ENCODE measurements at regions of chr1 and their contacts with region 1.

Region 1: GRCh38 chr1:61049850-61050540 is 32.4 kb upstream of the NFIA start:
- DNase-seq: peak; percentile 77 to 91
- H3K4me3 ChIP-seq: peak overlapping the region; percentile 88
- H3K27ac ChIP-seq: no peak overlapping the region
- H3K4me1 ChIP-seq: peaks cover 4% of the 10 kb centered on the region; the same call in 1 of the 2 replicates
- H3K27me3 ChIP-seq: no peaks in the 10 kb centered on the region
- CTCF ChIP-seq: peak; percentile 93

Region 2: DNA sequence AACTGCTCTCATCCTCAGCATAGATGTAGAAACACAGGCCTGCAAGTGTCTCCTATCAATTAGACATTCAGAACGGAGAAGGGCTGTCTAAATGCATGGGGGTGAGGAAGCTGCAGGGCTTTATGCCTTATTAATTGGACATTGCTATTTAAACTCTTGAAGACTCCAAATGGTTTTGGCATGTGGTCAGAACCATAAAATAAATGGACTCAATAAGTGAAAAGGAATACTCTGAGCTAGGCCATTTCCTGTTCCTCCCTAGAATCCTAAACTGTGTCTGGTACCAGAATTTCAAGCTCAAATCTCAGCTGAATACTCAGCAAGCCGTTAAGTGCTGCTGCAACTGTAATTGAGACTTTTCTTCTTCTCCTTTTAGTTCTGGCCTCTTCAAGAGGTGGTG is 896.0 kb before region 1 on chr1:
- CTCF ChIA-PET with region 1: no interaction called
- POLR2A ChIA-PET with region 1: no interaction called
- intact Hi-C with region 1: loop called (anchors 10 kb)
- DNase-seq: no peak
- H3K4me3 ChIP-seq: no peak overlapping the region
- H3K27ac ChIP-seq: no peak overlapping the region
- H3K4me1 ChIP-seq: no peaks in the 10 kb centered on the region
- H3K27me3 ChIP-seq: no peaks in the 10 kb centered on the region
- CTCF ChIP-seq: no peak

Region 3: GRCh38 chr1:61028136-61028535 is 21.9 kb before region 1 on chr1:
- CTCF ChIA-PET with region 1: no interaction called
- POLR2A ChIA-PET with region 1: no interaction called
- intact Hi-C with region 1: no loop called
- DNase-seq: no peak
- H3K4me3 ChIP-seq: no peak overlapping the region
- H3K27ac ChIP-seq: no peak overlapping the region
- H3K4me1 ChIP-seq: no peaks in the 10 kb centered on the region
- H3K27me3 ChIP-seq: no peaks in the 10 kb centered on the region
- CTCF ChIP-seq: no peak

Region 4: DNA sequence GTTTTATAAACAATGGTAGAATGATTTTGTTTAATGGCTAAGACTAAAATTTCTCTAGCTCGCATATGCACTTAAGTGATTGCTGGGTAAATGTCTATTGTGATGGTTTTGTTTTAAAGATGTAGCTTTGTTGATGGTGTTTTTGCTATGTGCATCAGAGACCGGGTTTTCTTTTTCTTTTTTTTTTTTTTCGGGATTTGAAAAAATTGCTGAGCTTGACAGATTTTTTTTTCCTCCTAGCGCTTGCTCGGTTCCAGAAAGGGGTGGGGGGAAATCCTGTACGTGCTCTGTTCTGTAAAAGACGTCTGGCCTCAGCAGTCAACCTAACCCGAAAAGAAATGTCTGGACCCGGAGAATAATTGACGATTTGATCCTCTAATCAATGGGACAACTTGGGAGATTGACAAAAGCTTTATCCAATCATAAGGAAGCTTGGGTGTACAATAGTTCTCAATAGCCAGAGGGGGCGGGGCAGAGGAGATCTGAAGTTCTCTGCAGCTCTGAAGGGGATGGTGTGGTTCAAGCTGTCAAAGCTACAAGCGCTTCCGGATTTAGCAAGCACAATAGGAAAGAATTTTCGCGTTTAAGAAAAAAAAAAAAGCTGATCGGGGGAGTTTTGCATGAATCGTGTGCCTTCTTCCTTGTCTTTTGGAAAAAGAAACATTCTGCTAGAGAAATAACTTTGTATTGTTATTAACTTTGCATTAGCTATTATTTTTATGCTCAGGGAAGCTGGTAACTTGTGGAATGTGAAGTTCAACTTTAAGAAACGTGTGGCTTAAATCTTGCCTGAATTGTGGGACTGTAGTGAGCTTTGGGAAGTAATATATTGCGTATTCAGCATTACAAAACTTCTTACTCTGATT is 27.9 kb after region 1 on chr1:
- CTCF ChIA-PET with region 1: interaction called, 5 read pairs
- POLR2A ChIA-PET with region 1: no interaction called
- intact Hi-C with region 1: loop called (anchors 1 kb)
- DNase-seq: peak; percentile 92 to 99
- H3K4me3 ChIP-seq: peak overlapping the region; percentile 68
- H3K27ac ChIP-seq: peak overlapping the region; percentile 67
- H3K4me1 ChIP-seq: peaks cover 51% of the 10 kb centered on the region
- H3K27me3 ChIP-seq: no peaks in the 10 kb centered on the region
- CTCF ChIP-seq: no peak

Region 5: GRCh38 chr1:61141288-61142042 is 91.5 kb after region 1 on chr1:
- CTCF ChIA-PET with region 1: interaction called, 6 read pairs
- POLR2A ChIA-PET with region 1: interaction called, 38 read pairs
- intact Hi-C with region 1: no loop called
- DNase-seq: peak; percentile 35 to 93
- H3K4me3 ChIP-seq: peak overlapping the region; percentile 16; the same call in 1 of the 2 replicates
- H3K27ac ChIP-seq: peak overlapping the region; percentile 89
- H3K4me1 ChIP-seq: peaks cover 59% of the 10 kb centered on the region
- H3K27me3 ChIP-seq: no peaks in the 10 kb centered on the region
- CTCF ChIP-seq: no peak

Region 6: GRCh38 chr1:61641578-61642336 is 591.8 kb after region 1 on chr1:
- CTCF ChIA-PET with region 1: no interaction called
- POLR2A ChIA-PET with region 1: no interaction called
- intact Hi-C with region 1: loop called (anchors 2 kb)
- DNase-seq: peak in 1 of 2 experiments; percentile 37
- H3K4me3 ChIP-seq: no peak overlapping the region
- H3K27ac ChIP-seq: peak overlapping the region; percentile 59
- H3K4me1 ChIP-seq: peaks cover 48% of the 10 kb centered on the region
- H3K27me3 ChIP-seq: no peaks in the 10 kb centered on the region
- CTCF ChIP-seq: no peak